MCF 10A (cell line): ENCODE measurements at regions of chr17 and their contacts with region 1.

Region 1: DNA sequence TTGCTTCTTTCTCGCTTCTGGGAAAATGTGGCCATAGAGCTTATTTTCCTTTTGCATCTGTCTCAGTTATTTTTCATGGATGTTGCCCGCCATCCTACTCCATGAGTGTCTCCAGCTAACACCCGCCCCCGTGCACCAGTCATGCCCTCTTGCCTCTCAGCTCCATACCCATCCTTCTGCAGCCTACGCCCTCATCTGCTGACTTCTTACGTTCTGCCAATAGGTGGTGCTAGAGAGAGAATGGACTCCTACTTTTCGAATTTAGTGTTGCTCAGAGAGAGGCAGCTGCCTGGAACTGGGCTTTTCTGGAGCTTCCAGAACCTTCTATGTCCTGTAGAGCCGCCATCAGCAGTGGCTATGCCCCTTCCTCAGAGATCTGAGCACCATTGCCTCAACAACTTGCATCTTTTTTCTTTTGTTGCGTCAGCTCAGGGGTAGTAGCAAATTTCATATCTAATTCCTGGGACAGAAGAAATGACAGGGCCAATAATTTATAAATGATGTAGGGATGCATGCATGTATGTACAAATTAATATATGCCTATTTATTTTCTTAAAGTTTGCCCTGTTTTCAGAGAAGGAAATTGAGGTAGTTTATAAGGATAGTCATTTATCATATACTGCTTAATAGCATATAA is 119.7 kb upstream of the MYOCD start:
- DNase-seq: peak; percentile 67
- H3K4me3 Mint-ChIP-seq: no peak overlapping the region
- H3K27ac Mint-ChIP-seq: no peak overlapping the region
- H3K4me1 Mint-ChIP-seq: no peaks in the 10 kb centered on the region
- H3K27me3 Mint-ChIP-seq: peaks cover 33% of the 10 kb centered on the region
- CTCF ChIP-seq: peak; percentile 52

Region 2: GRCh38 chr17:12568358-12569251 is 22.6 kb after region 1 on chr17:
- CTCF ChIA-PET with region 1: interaction called, 26 read pairs
- POLR2A ChIA-PET with region 1: interaction called, 3 read pairs
- intact Hi-C with region 1: no loop called
- DNase-seq: peak; percentile 6
- H3K4me3 Mint-ChIP-seq: no peak overlapping the region
- H3K27ac Mint-ChIP-seq: no peak overlapping the region
- H3K4me1 Mint-ChIP-seq: no peaks in the 10 kb centered on the region
- H3K27me3 Mint-ChIP-seq: peaks cover 29% of the 10 kb centered on the region
- CTCF ChIP-seq: no peak

Region 3: GRCh38 chr17:12667299-12667958 is 121.4 kb after region 1 on chr17:
- CTCF ChIA-PET with region 1: interaction called, 20 read pairs
- POLR2A ChIA-PET with region 1: no interaction called
- intact Hi-C with region 1: loop called (anchors 2 kb)
- DNase-seq: peak; percentile 51
- H3K4me3 Mint-ChIP-seq: no peak overlapping the region
- H3K27ac Mint-ChIP-seq: no peak overlapping the region
- H3K4me1 Mint-ChIP-seq: no peaks in the 10 kb centered on the region
- H3K27me3 Mint-ChIP-seq: peaks cover 14% of the 10 kb centered on the region
- CTCF ChIP-seq: peak; percentile 30

Region 4: DNA sequence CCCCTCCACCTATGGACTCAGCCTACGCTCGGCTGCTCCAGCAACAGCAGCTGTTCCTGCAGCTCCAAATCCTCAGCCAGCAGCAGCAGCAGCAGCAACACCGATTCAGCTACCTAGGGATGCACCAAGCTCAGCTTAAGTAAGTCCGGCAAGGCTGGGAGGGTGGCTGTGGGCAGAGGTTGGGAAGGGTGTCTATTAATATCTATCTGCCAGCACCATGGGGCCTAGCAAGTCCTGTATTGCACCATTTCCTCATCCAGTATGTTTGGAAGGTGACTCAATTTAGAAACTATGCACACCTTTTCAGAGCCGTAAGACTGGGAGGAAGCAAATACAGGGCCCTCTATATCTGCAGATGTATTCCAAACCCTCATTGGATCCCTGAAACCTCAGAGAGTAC is 198.3 kb after region 1 on chr17:
- CTCF ChIA-PET with region 1: interaction called, 10 read pairs
- POLR2A ChIA-PET with region 1: no interaction called
- intact Hi-C with region 1: loop called (anchors 2 kb)
- DNase-seq: peak; percentile 69
- H3K4me3 Mint-ChIP-seq: no peak overlapping the region
- H3K27ac Mint-ChIP-seq: no peak overlapping the region
- H3K4me1 Mint-ChIP-seq: no peaks in the 10 kb centered on the region
- H3K27me3 Mint-ChIP-seq: peaks cover 23% of the 10 kb centered on the region
- CTCF ChIP-seq: no peak